CD8-positive, alpha-beta T cell (primary cell): ENCODE measurements at regions of chr19 and their contacts with region 1.

Region 1: DNA sequence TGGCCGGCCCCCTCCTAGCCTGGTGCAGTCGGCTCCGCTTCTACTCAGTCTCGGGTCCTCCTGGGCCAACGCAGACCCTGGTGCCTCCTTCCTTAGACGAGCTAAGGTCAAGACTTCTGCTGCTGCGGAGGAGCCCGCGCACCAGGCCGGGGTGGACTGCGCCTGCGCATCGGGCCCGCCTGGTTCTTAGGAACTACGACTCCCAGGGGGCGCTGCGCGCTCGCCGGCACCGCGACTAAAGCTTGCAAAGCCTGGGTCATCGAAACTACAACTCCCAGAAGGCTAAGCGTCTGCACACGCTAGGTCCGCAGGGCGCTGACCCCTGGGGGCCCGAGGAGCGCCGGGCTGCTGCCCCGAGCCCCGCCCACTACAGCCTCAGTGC is at the start of gene ZNF835:
- DNase-seq: peak; percentile 46 to 86 (median 79)
- ATAC-seq: peak; percentile 92
- H3K4me3 ChIP-seq: peak within 1 kb of the TSS; percentile 29 to 66
- H3K4me3 Mint-ChIP-seq: peak within 1 kb of the TSS; percentile 90
- H3K27ac ChIP-seq: peak within 1 kb of the TSS in 1 of 2 experiments; percentile 30
- H3K27ac Mint-ChIP-seq: peak within 1 kb of the TSS; percentile 67
- H3K4me1 ChIP-seq: peaks cover 11% of the 10 kb centered on the region
- H3K4me1 Mint-ChIP-seq: peaks cover 12% of the 10 kb centered on the region
- H3K27me3 ChIP-seq: no peaks in the 10 kb centered on the region
- H3K27me3 Mint-ChIP-seq: no peaks in the 10 kb centered on the region
- CTCF ChIP-seq: no peak
- total RNA-seq, gene ZNF835: 0.46 to 0.75 TPM

Region 2: GRCh38 chr19:56403764-56404704 is 267.6 kb before region 1 on chr19 and contains the start of gene ZNF583:
- CTCF ChIA-PET with region 1: no interaction called
- POLR2A ChIA-PET with region 1: no interaction called
- intact Hi-C with region 1: loop called in 1 of 2 experiments (anchors 1 kb)
- DNase-seq: peak; percentile 83 to 95 (median 91)
- ATAC-seq: peak; percentile 82
- H3K4me3 ChIP-seq: peak within 1 kb of the TSS; percentile 80 to 93
- H3K4me3 Mint-ChIP-seq: peak within 1 kb of the TSS; percentile 85
- H3K27ac ChIP-seq: peak within 1 kb of the TSS; percentile 83 to 99
- H3K27ac Mint-ChIP-seq: peak within 1 kb of the TSS; percentile 88
- H3K4me1 ChIP-seq: peaks cover 18% of the 10 kb centered on the region
- H3K4me1 Mint-ChIP-seq: peaks cover 32% of the 10 kb centered on the region
- H3K27me3 ChIP-seq: no peaks in the 10 kb centered on the region
- H3K27me3 Mint-ChIP-seq: no peaks in the 10 kb centered on the region
- CTCF ChIP-seq: no peak
- total RNA-seq, gene ZNF583: 1.3 to 2.4 TPM

Region 3: GRCh38 chr19:56594783-56595547 is 76.6 kb before region 1 on chr19 and contains the start of gene ZNF71:
- CTCF ChIA-PET with region 1: no interaction called
- POLR2A ChIA-PET with region 1: no interaction called
- intact Hi-C with region 1: loop called (anchors 1 to 2 kb)
- DNase-seq: peak; percentile 72 to 91 (median 87)
- ATAC-seq: peak; percentile 96
- H3K4me3 ChIP-seq: peak within 1 kb of the TSS; percentile 45 to 72
- H3K4me3 Mint-ChIP-seq: peak within 1 kb of the TSS; percentile 91
- H3K27ac ChIP-seq: peak within 1 kb of the TSS; percentile 58 to 65
- H3K27ac Mint-ChIP-seq: peak within 1 kb of the TSS; percentile 91
- H3K4me1 ChIP-seq: peaks cover 18% of the 10 kb centered on the region
- H3K4me1 Mint-ChIP-seq: peaks cover 19% of the 10 kb centered on the region
- H3K27me3 ChIP-seq: no peaks in the 10 kb centered on the region
- H3K27me3 Mint-ChIP-seq: no peaks in the 10 kb centered on the region
- CTCF ChIP-seq: no peak
- total RNA-seq, gene ZNF71: 2.4 to 2.8 TPM